Aorta (tissue), 5 donors: ENCODE measurements at regions of chr1 and their contacts with region 1.

Region 1: GRCh38 chr1:93615582-93616150 is 66.0 kb downstream of the BCAR3 start:
- DNase-seq: no peak
- ATAC-seq: no peak
- H3K4me3 ChIP-seq: no peak overlapping the region
- H3K27ac ChIP-seq: peak overlapping the region in 1 of 2 donors; percentile 28
- H3K4me1 ChIP-seq: peaks cover 3 to 5% of the 10 kb centered on the region in 2 donors
- H3K27me3 ChIP-seq: no peaks in the 10 kb centered on the region

Region 2: DNA sequence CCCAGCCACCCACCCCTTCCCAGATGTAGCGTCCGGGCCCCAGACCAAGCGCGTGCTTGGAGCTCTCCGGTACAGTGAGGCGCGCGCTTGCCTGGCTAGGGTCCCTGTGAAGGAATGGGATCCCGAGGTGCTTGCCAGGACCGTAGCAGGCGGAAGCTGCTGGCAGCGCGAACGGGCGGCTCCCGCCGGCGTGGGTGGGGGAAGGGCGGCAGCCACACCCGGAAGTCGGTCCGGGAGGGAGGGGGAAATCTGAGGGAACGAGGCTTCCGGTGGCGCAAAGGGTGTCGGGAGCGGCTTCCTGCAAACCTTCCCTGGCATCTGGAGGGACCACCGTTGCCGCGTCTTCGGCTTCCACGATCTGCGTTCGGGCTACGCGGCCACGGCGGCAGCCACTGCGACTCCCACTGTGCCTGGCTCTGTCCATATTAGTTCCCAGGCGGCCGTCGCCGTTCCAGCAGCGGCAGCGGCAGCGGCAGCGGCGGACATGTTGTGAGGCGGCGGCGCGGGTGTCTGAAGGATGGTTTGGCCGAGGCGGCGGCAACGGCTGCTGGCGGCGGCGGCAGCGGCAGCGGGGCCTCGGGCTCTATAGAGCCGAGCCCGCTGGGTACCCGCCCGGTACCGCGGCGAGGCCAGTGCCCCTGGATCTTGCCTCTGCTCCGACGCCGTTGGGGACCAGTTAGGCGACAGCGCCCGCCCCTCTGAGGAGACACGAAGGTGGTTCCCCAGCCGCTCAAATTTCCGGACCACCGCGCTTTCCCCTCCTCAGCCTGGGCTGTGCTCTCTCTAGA is 269.8 kb before region 1 on chr1 and contains the start of gene DR1:
- intact Hi-C with region 1: loop called in 1 of 2 experiments (anchors 10 kb)
- DNase-seq: peak; percentile 96 to 98
- ATAC-seq: peak; percentile 98
- H3K4me3 ChIP-seq: peak within 1 kb of the TSS; percentile 84 to 91
- H3K27ac ChIP-seq: peak within 1 kb of the TSS; percentile 45 to 91
- H3K4me1 ChIP-seq: no peaks in the 10 kb centered on the region
- H3K27me3 ChIP-seq: no peaks in the 10 kb centered on the region
- total RNA-seq, gene DR1: 44.7 to 45.2 TPM

Region 3: DNA sequence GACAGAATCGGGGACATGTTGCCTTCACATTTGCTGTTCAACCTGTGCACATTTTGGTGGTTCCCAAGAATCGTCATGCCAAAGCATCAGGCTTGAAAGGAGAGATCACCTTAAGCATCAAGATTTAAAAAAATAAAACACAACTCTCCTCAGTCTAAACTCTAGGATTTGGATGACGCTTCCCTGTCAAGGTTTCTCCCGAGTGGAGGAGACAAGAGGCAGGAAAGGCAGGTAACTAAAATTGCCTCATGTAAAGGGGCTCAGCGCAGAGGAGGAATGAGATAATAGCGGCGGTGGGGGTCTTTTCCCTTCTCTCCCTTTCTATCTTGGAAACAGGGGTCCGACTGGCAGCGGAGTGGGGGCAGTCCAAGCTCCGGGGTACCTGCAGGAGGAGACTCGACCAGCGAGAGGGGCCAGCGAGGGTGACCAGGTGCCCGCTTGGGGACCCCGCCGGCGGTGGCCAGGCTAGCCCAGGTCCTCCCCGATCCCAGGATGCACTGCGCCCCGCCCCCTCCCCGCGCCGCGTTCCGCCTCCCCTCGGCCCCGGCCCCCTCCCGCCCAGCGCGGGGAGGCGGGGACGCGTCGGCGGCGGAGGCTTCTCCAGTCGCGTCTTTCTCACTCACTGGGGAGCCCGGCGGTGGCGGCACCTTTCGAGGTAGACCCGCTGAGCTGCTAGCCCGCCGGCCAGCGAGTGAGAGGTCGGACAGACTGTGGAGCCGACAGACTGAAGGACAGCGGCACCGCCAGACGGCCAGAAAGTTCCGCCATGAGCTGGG is 168.0 kb before region 1 on chr1 and contains the start of gene FNBP1L:
- intact Hi-C with region 1: loop called in 1 of 2 experiments (anchors 5 kb)
- DNase-seq: peak; percentile 73 to 88
- ATAC-seq: peak; percentile 93
- H3K4me3 ChIP-seq: peak within 1 kb of the TSS; percentile 82 to 93
- H3K27ac ChIP-seq: no peak within 1 kb of the TSS
- H3K4me1 ChIP-seq: no peaks in the 10 kb centered on the region
- H3K27me3 ChIP-seq: no peaks in the 10 kb centered on the region
- total RNA-seq, gene FNBP1L: 10.6 to 28.6 TPM